ENCODE measurements at regions of chr20 and their contacts with region 1.

Region 1: GRCh38 chr20:24948939-24949679 is at the start of gene CST7:
- DNase-seq: peak; percentile 52
- H3K4me3 ChIP-seq: no peak within 1 kb of the TSS
- H3K27ac ChIP-seq: no peak within 1 kb of the TSS
- H3K4me1 ChIP-seq: no peaks in the 10 kb centered on the region
- H3K27me3 ChIP-seq: no peaks in the 10 kb centered on the region
- CTCF ChIP-seq: no peak
- total RNA-seq, gene CST7: not detected

Region 2: DNA sequence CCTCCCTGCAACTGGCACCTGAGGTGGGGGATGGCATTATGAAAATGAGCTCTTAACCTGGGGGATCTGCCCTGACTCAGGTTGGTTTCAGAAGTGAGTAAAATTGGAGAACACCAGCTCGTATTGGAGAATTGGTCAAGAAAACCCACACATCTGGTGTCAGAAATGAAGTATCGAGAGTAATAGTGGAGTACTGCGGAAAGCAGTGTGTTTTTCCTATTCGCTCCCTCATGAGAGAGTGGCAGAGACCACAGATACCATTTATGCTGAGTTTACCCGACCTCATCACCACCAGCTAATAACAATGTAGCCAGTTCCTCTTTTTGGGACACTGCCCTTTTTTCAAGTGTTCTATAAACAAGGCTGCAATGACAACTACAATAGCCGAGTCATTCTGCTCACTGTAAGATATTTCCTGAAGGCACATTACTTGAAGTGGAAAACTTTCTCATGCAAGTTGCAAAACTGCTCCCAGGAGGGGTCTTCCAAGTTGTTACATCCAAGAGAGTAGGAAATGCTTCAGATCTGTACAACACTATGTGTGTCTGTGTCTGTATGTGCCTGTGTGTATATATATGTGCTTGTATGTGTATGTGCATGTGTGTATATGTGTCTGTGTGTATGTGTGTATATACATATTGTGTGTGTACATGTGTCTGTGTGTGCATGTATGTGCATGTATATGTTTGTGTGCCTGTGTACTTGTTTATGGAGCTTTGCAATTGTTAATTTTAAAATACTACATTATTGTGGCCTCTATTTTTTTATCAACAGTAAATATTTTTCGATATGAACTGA is 106.0 kb before region 1 on chr20:
- CTCF ChIA-PET with region 1: no interaction called
- dilution Hi-C with region 1: loop called (anchors 25 kb)
- in situ Hi-C with region 1: no loop called
- intact Hi-C with region 1: no loop called
- DNase-seq: no peak
- H3K4me3 ChIP-seq: no peak overlapping the region
- H3K27ac ChIP-seq: no peak overlapping the region
- H3K4me1 ChIP-seq: no peaks in the 10 kb centered on the region
- H3K27me3 ChIP-seq: peaks cover 2% of the 10 kb centered on the region
- CTCF ChIP-seq: no peak